A549 (cell line): ENCODE measurements at regions of chr10 and their contacts with region 1.

Region 1: DNA sequence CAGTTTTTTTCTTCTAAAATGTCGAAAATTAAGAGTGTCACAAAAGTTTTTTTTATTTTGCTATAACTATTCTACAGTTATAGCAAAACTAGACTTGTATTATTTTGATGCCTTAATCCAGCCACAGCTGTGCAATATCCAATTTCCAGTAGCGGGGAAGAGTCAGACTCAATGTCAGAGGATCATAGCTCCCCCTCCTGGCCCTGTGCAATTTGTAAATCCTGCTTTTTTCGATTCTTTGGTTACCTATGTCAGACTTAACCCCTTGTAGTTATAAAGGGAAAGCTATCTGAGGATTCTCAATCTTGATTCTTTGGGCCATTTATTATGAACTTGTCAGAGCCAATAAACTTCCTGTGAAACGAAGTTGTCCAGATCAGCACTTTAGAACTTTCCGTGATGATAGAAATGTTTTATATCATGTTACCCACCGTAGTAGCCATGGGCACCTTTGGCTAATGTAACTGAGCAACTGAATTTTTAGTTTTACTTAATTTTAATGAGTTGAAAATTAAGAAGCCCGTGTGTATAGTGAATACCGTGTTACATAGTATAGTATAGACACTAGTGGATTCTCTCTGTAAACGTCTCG is 87.7 kb upstream of the PRKCQ start:
- DNase-seq: peak; percentile 33 to 66
- ATAC-seq: peak; percentile 81 to 90
- H3K4me3 ChIP-seq: no peak overlapping the region
- H3K27ac ChIP-seq: no peak overlapping the region
- H3K4me1 ChIP-seq: no peaks in the 10 kb centered on the region
- CTCF ChIP-seq: peak; percentile 82
- EP300 ChIP-seq: no peak
- POLR2A ChIP-seq: no peak
- RAD21 ChIP-seq: peak; percentile 75 to 82

Region 2: DNA sequence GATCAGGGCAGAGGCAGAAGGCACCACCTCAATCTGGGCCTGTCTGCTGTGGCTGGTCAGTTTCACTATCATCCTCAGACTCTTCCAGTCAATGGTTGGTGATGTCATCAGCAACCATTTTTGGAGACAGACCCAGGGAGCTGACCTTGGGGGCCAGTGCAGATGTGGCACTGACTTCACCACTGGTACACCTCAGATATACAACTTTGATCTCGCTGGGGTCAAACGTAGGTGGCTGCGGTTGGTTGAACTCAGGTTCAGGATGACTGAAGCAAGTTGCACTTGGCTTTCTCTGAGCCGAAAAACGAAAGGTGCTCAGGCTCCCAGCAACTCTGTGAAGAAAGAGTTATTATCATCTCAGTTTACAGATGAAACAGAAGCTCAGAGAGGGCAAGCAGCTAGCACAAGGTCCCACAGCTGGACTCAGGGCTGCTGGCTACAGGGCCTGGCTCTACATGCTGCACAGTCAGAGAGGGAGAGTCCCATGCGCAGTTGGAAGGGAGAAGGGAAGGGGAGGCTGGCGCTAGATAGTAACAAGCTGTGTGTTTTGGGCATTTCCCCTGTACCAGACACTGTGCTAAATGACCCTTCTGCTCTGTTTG is 805.3 kb before region 1 on chr10:
- CTCF ChIA-PET with region 1: no interaction called
- POLR2A ChIA-PET with region 1: no interaction called
- DNase-seq: no peak
- ATAC-seq: no peak
- H3K4me3 ChIP-seq: no peak overlapping the region
- H3K27ac ChIP-seq: peak overlapping the region in 1 of 2 experiments; percentile 39; a peak in 2 of 6 replicates
- H3K4me1 ChIP-seq: peaks cover 19% of the 10 kb centered on the region
- CTCF ChIP-seq: no peak
- EP300 ChIP-seq: no peak
- POLR2A ChIP-seq: no peak
- RAD21 ChIP-seq: no peak

Region 3: DNA sequence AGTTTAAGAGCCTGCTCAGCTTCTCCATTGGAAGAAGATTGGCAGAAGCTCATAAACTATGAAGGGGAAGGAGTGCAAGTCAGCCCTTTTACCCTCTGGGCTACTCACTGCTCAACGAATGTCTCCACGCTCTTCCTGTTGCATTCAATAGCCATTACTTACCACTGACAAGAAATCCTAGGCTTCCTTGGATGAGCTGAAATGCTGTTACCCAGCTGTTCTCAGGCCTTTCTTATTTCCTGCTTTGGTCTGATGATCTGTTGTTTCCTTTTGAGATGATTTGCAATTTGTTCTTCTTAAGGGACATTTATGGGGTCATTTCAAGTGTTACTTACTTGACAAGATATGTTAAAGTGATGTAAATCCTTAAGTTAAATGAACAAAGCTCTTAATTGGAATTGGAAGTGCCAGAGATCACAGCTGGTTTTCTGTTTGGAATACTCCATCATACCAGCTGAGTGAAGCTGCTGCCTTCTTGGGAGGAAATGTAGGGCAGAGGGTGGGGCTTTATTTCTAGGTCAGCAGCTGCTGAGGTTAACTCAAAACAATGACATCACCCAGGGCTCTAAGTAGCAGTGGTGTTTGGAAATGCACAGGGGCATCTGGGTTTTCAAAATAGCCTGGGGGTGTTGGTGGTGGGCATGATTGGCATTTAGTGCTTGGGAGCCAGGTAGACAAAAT is 257.7 kb before region 1 on chr10:
- CTCF ChIA-PET with region 1: interaction called, 30 read pairs
- POLR2A ChIA-PET with region 1: no interaction called
- DNase-seq: no peak
- ATAC-seq: peak in 1 of 2 experiments; percentile 40; a peak in 1 of 6 replicates
- H3K4me3 ChIP-seq: no peak overlapping the region
- H3K27ac ChIP-seq: no peak overlapping the region
- H3K4me1 ChIP-seq: peaks cover 7% of the 10 kb centered on the region
- CTCF ChIP-seq: no peak
- EP300 ChIP-seq: no peak
- POLR2A ChIP-seq: no peak
- RAD21 ChIP-seq: no peak

Region 4: GRCh38 chr10:6445501-6446316 is 222.1 kb before region 1 on chr10:
- CTCF ChIA-PET with region 1: interaction called, 15 read pairs
- POLR2A ChIA-PET with region 1: no interaction called
- DNase-seq: peak; percentile 25 to 60
- ATAC-seq: peak; percentile 64 to 77; a peak in 5 of 6 replicates
- H3K4me3 ChIP-seq: no peak overlapping the region
- H3K27ac ChIP-seq: no peak overlapping the region
- H3K4me1 ChIP-seq: no peaks in the 10 kb centered on the region
- CTCF ChIP-seq: peak; percentile 80
- EP300 ChIP-seq: no peak
- POLR2A ChIP-seq: no peak
- RAD21 ChIP-seq: peak; percentile 65 to 70

Region 5: GRCh38 chr10:6647811-6648526 is 19.8 kb before region 1 on chr10:
- CTCF ChIA-PET with region 1: interaction called, 10 read pairs
- POLR2A ChIA-PET with region 1: no interaction called
- DNase-seq: peak; percentile 52 to 59
- ATAC-seq: peak; percentile 76 to 95
- H3K4me3 ChIP-seq: no peak overlapping the region
- H3K27ac ChIP-seq: no peak overlapping the region
- H3K4me1 ChIP-seq: no peaks in the 10 kb centered on the region
- CTCF ChIP-seq: peak; percentile 47
- EP300 ChIP-seq: no peak
- POLR2A ChIP-seq: no peak
- RAD21 ChIP-seq: peak; percentile 38 to 55; a peak in 3 of 5 replicates

Region 6: GRCh38 chr10:7417103-7417623 is 749.4 kb after region 1 on chr10:
- CTCF ChIA-PET with region 1: interaction called, 57 read pairs
- POLR2A ChIA-PET with region 1: no interaction called
- DNase-seq: peak in 1 of 2 experiments; percentile 59
- ATAC-seq: peak in 1 of 2 experiments; percentile 58; a peak in 3 of 6 replicates
- H3K4me3 ChIP-seq: no peak overlapping the region
- H3K27ac ChIP-seq: peak overlapping the region in 1 of 2 experiments; percentile 11; a peak in 1 of 6 replicates
- H3K4me1 ChIP-seq: peaks cover 16% of the 10 kb centered on the region; the same call in 2 of the 3 replicates
- CTCF ChIP-seq: peak; percentile 81
- EP300 ChIP-seq: no peak
- POLR2A ChIP-seq: no peak
- RAD21 ChIP-seq: peak; percentile 89 to 93